Aorta (tissue), 5 donors: ENCODE measurements at regions of chr6 and their contacts with region 1.

Region 1: DNA sequence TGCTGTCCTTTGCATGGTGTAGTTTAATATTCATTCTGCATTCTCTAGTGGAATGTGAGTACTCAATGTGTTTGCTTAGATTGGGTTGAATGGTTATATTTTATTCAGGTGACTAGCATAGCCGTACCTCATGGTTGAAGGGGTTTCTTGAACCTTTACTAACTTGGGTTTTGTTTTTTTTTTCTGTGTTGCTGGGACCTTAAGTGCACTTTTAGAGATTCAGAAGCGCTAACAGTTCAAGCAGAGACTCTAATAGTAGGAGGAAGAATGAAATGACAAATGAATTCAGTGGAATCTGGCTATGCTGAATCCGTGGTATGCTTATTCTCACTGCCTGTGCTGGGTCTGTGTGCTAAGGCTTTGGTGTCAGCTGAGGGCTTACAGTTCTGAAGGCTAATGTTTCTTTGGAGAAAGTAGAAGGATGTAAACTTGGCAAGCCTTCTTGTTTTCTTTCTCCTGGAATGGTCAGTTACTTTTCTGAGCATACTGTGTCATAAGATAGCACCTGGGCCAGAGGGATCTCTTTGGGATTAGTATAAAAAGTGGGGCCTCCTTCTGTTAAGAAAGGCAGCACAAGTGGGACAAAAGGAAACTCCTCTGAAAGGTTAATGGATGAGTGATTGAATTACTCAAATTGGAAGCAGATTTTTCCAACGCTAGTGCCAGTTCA is 28.7 kb downstream of the RNF144B start:
- DNase-seq: no peak
- ATAC-seq: peak; percentile 46
- H3K4me3 ChIP-seq: peak overlapping the region in 1 of 2 donors; percentile 14
- H3K27ac ChIP-seq: peak overlapping the region; percentile 37 to 60
- H3K4me1 ChIP-seq: peaks cover 2 to 9% of the 10 kb centered on the region in 2 donors
- H3K27me3 ChIP-seq: no peaks in the 10 kb centered on the region

Region 2: GRCh38 chr6:18362058-18362561 is 53.7 kb before region 1 on chr6:
- intact Hi-C with region 1: loop called in 1 of 2 experiments (anchors 10 kb)
- DNase-seq: no peak
- ATAC-seq: peak; percentile 83
- H3K4me3 ChIP-seq: no peak overlapping the region
- H3K27ac ChIP-seq: peak overlapping the region in 1 of 2 donors; percentile 96
- H3K4me1 ChIP-seq: no peaks in the 10 kb centered on the region
- H3K27me3 ChIP-seq: no peaks in the 10 kb centered on the region

Region 3: DNA sequence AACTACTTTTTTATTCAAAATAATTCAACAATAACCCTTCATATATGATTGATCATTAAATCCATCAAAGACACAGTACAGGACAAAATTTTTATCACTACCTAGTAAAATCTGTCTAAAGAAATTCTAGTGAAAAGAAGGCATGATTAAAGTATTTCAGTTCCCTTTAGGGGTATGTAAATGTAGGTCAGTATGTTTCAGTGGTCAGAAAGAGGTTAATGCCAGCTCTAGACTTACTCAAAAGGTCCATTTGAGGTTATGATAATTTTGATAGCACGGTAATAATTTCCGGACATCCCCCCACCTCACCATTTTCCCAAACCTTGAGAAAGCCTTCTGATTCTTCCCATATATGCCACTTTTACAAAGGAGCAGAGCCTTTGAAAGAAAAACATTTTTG is 1227.9 kb after region 1 on chr6:
- intact Hi-C with region 1: no loop called
- DNase-seq: no peak
- ATAC-seq: no peak
- H3K4me3 ChIP-seq: no peak overlapping the region
- H3K27ac ChIP-seq: no peak overlapping the region
- H3K4me1 ChIP-seq: no peaks in the 10 kb centered on the region
- H3K27me3 ChIP-seq: no peaks in the 10 kb centered on the region